Colonic mucosa (tissue), 4 donors: ENCODE measurements at regions of chr6 and their contacts with region 1.

Region 1: GRCh38 chr6:74598473-74599393 is 607.1 kb downstream of the COL12A1 start:
- DNase-seq: no peak
- H3K4me3 ChIP-seq: no peak overlapping the region
- H3K27ac ChIP-seq: no peak overlapping the region
- H3K4me1 ChIP-seq: no peaks in the 10 kb centered on the region
- H3K27me3 ChIP-seq: no peaks in the 10 kb centered on the region
- CTCF ChIP-seq: no peak

Region 2: DNA sequence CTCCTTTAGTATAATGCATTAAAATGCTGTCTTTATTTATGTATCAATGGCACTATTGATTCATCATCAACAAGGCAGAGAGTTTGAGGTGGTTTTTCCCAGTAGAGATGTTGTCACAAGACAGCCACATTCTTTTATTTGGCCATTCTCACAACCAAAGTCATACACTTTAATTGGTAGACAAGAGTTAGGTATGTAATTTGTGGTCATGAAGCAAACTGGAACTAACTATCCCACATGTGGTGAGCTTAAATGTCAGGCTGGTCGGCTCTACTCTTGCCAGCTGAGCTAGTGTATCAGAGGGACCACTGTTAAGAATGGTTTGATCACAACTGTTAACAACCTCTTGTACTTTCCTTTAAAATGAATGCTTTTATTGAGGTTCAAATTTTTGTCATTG is 188.1 kb before region 1 on chr6:
- intact Hi-C with region 1: loop called (anchors 10 kb)
- DNase-seq: no peak
- H3K4me3 ChIP-seq: no peak overlapping the region
- H3K27ac ChIP-seq: no peak overlapping the region
- H3K4me1 ChIP-seq: no peaks in the 10 kb centered on the region
- H3K27me3 ChIP-seq: no peaks in the 10 kb centered on the region
- CTCF ChIP-seq: no peak

Region 3: DNA sequence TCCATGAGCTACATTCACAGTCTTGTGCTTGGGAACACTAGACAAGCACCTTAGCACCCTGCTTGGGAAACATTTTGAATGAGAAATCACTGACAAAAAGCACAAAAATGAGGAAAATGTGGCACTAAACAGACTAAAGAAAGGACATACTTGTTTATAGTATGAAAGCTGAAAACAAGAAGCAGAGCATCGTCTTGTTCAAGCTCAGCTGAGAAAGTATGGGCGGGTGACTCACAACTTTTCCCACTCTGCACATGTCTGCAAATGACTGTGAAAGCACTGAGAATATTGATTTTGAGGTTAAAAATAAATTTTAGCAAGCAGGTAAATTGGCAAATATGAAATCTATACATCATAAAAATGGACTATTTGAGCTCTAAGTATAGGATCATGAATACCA is 118.2 kb before region 1 on chr6:
- intact Hi-C with region 1: no loop called
- DNase-seq: no peak
- H3K4me3 ChIP-seq: no peak overlapping the region
- H3K27ac ChIP-seq: no peak overlapping the region
- H3K4me1 ChIP-seq: no peaks in the 10 kb centered on the region
- H3K27me3 ChIP-seq: no peaks in the 10 kb centered on the region
- CTCF ChIP-seq: no peak